GM10248 (cell line): ENCODE measurements at regions of chr9 and their contacts with region 1.

Region 1: GRCh38 chr9:87502436-87503221 is 5.0 kb downstream of the DAPK1 start:
- DNase-seq: no peak
- CTCF ChIP-seq: no peak

Region 2: DNA sequence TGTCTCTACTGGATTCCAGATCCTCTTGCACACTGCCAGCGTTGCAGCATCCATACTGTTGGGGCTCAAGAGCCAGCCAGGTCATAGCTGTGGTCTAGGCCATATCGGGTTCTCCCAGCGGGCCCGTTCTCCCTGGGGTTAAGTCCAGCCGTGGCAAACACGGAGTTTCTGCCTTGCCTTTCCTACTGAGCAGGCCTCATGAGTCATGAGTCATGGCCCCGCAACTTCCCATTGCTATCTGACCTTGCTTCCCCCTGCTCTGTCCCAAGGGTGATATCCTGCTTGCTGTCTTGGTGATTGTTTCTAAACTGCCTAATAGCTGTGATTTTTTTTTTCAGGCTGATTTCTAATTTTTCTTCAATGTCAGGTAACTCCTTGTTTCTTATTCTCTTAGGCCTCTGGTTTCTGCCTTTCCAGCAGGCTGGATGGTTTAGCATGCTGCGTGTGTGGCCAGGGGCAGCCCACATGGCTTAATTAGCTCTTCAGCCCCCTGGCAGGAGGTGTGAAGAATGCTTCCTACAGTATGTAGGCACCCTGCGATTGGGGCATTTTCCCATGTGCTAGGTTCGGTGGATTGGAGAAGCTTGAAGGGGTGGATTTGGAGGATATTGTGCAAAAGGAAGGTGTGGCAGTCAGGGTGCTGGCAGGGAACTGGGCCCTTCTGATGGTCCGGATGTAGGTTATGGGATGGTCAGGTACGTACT is 13.7 kb after region 1 on chr9:
- CTCF ChIA-PET with region 1: interaction called, 24 read pairs
- POLR2A ChIA-PET with region 1: interaction called, 3 read pairs
- DNase-seq: no peak
- CTCF ChIP-seq: no peak